Gastrocnemius medialis (tissue), 4 donors: ENCODE measurements at regions of chr10 and their contacts with region 1.

Region 1: GRCh38 chr10:16817125-16818019 is at the start of gene RSU1:
- DNase-seq: peak; percentile 100
- ATAC-seq: peak; percentile 98 to 99
- H3K4me3 ChIP-seq: peak within 1 kb of the TSS; percentile 70 to 91 (median 77)
- H3K27ac ChIP-seq: peak within 1 kb of the TSS; percentile 85 to 94 (median 90)
- H3K4me1 ChIP-seq: peaks cover 18 to 20% of the 10 kb centered on the region in 2 donors
- H3K27me3 ChIP-seq: no peaks in the 10 kb centered on the region
- CTCF ChIP-seq: no peak
- POLR2A ChIP-seq: peak; percentile 59 to 69
- total RNA-seq, gene RSU1: 24.2 to 32.8 (median 26.1) TPM

Region 2: GRCh38 chr10:16436758-16437539 is 380.4 kb before region 1 on chr10 and contains the start of gene PTER:
- in situ Hi-C with region 1: loop called in 1 of 4 experiments (anchors 25 kb)
- intact Hi-C with region 1: no loop called
- DNase-seq: peak; percentile 95
- ATAC-seq: peak; percentile 94 to 96
- H3K4me3 ChIP-seq: peak within 1 kb of the TSS; percentile 62 to 68 (median 66)
- H3K27ac ChIP-seq: peak within 1 kb of the TSS; percentile 74 to 85 (median 81)
- H3K4me1 ChIP-seq: peaks cover 36 to 41% of the 10 kb centered on the region in 2 donors
- H3K27me3 ChIP-seq: no peaks in the 10 kb centered on the region
- CTCF ChIP-seq: no peak
- POLR2A ChIP-seq: peak; percentile 71 to 83
- total RNA-seq, gene PTER: 6.5 to 10.4 (median 8.5) TPM

Region 3: DNA sequence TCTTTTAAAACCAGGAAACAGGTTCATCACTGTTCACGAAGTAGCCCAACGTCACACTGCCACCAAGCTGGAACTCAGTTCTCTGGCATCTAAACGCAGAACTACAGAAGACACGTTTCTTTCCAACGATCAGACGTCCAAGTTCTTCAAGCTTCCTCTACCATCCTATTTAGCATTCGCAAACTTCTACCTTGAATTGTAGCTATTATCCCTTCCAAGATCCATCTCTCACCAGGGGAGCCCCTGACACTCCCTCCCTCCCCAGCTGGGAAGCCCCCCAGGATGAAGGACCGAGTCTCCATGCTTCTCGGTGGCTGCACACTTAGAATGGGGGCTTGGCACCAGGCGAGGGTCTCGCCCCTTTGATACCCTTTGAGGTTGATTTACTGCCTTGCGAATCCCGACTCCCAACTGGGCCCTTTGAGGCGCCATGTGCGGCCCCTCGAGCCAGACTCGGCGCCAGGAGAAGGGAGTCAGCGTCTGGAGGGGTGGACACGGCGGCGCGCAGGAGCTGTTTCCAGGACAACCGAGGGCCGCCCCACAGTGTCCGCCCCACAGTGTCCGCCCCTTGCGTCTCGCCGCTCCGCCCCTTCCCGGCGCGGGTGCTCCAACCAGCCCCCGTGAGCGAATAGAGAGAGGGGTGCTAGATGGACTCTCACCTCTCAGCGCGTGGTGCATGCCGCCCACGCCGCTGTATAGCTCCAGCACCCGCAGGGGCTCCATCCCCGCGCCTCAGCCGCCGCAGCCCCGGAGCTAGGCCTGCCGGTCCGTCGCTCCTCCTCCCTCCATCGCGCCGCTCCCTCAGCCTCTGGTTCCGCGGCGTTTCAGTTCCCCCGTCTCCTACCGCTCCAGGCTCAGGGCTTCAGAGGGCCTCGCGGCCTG is 383.8 kb after region 1 on chr10 and contains the start of gene TRDMT1:
- in situ Hi-C with region 1: no loop called
- intact Hi-C with region 1: loop called (anchors 5 kb)
- DNase-seq: peak; percentile 66 to 73
- ATAC-seq: peak; percentile 94 to 96
- H3K4me3 ChIP-seq: peak within 1 kb of the TSS; percentile 83 to 93 (median 90)
- H3K27ac ChIP-seq: peak within 1 kb of the TSS; percentile 78 to 88 (median 86)
- H3K4me1 ChIP-seq: peaks cover 9 to 18% of the 10 kb centered on the region in 2 donors
- H3K27me3 ChIP-seq: no peaks in the 10 kb centered on the region
- CTCF ChIP-seq: peak in 1 of 5 experiments; percentile 29
- POLR2A ChIP-seq: peak; percentile 38 to 40
- total RNA-seq, gene TRDMT1: 0.85 to 4.7 (median 2.1) TPM

Region 4: GRCh38 chr10:18659120-18659818 is 1841.9 kb after region 1 on chr10 and contains the start of gene ARL5B:
- in situ Hi-C with region 1: loop called in 1 of 4 experiments (anchors 25 kb)
- intact Hi-C with region 1: no loop called
- DNase-seq: peak; percentile 97
- ATAC-seq: peak; percentile 94 to 98
- H3K4me3 ChIP-seq: peak within 1 kb of the TSS; percentile 79 to 98 (median 91)
- H3K27ac ChIP-seq: peak within 1 kb of the TSS; percentile 94 to 96 (median 96)
- H3K4me1 ChIP-seq: peaks cover 20 to 27% of the 10 kb centered on the region in 2 donors
- H3K27me3 ChIP-seq: no peaks in the 10 kb centered on the region
- CTCF ChIP-seq: no peak
- POLR2A ChIP-seq: peak; percentile 87 to 88
- total RNA-seq, gene ARL5B: 5.8 to 6.7 (median 6.4) TPM